ENCODE measurements at regions of chr3 and their contacts with region 1.

Region 1: GRCh38 chr3:4711689-4711992 is 218.5 kb downstream of the ITPR1 start:
- DNase-seq: no peak
- H3K4me3 ChIP-seq: no peak overlapping the region
- H3K27ac ChIP-seq: peak overlapping the region in 1 of 2 donors; percentile 54
- H3K4me1 ChIP-seq: peaks cover 0 to 12% (median 3%) of the 10 kb centered on the region in 4 donors
- H3K27me3 ChIP-seq: no peaks in the 10 kb centered on the region
- CTCF ChIP-seq: peak in 1 of 2 experiments; percentile 3

Region 2: GRCh38 chr3:4633078-4634004 is 78.3 kb before region 1 on chr3:
- intact Hi-C with region 1: no loop called
- DNase-seq: no peak
- H3K4me3 ChIP-seq: no peak overlapping the region
- H3K27ac ChIP-seq: peak overlapping the region; percentile 36 to 51
- H3K4me1 ChIP-seq: peaks cover 0 to 10% (median 3%) of the 10 kb centered on the region in 4 donors
- H3K27me3 ChIP-seq: no peaks in the 10 kb centered on the region
- CTCF ChIP-seq: peak; percentile 75 to 83

Region 3: GRCh38 chr3:4656626-4657328 is 54.9 kb before region 1 on chr3:
- intact Hi-C with region 1: no loop called
- DNase-seq: no peak
- H3K4me3 ChIP-seq: no peak overlapping the region
- H3K27ac ChIP-seq: peak overlapping the region; percentile 44 to 69
- H3K4me1 ChIP-seq: peaks cover 0 to 18% (median 10%) of the 10 kb centered on the region in 4 donors
- H3K27me3 ChIP-seq: no peaks in the 10 kb centered on the region
- CTCF ChIP-seq: no peak

Region 4: DNA sequence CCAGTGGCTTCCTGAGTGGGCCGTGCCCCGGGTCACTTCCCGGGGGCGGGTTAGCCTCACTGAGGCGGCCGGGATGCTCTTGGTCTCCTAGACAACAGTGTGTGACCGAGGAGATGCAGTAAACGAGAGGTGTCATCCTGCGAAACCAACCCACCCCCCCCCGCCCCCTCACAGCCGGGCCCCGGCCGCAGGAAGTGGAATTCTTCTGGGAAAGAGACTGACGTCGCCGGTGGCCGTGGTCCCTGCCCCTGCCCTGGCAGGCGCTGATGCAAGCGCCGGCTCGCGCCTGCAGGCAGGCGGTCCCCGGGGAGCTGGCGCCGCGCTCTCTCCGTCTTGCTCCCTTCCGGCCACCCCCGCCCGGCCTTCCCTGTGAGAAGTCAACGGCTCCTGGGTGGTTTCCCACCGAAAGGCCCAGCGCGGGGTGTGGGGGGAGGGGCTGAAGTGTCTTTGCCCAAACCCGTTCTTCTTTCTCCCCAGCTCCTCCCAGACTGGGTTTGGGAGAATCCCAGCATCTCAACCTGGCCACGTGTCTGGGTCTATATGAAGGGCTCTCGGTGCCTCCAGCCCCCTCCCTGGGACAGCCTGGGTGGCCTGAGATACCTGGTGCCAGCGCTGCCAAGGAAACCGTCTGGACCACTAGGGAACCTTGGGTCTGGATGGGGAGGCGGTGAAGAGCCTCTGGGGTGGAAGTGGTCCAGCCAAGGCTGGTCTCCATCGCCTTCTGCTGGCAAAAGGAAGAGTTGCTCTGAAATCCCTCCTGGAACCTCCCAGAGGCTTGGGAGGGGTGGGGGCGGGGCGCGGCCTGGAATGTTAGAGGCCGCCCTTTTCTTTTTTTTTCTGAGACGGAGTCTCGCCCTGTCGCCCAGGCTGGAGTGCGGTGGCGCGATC is 314.9 kb after region 1 on chr3:
- intact Hi-C with region 1: loop called (anchors 2 kb)
- DNase-seq: peak; percentile 85 to 98
- H3K4me3 ChIP-seq: peak overlapping the region; percentile 50 to 57
- H3K27ac ChIP-seq: peak overlapping the region; percentile 79 to 85
- H3K4me1 ChIP-seq: peaks cover 0 to 19% (median 7%) of the 10 kb centered on the region in 4 donors
- H3K27me3 ChIP-seq: no peaks in the 10 kb centered on the region
- CTCF ChIP-seq: peak; percentile 75 to 83

Region 5: GRCh38 chr3:5059782-5060181 is 348.1 kb after region 1 on chr3:
- intact Hi-C with region 1: loop called (anchors 2 kb)
- DNase-seq: no peak
- H3K4me3 ChIP-seq: no peak overlapping the region
- H3K27ac ChIP-seq: no peak overlapping the region
- H3K4me1 ChIP-seq: peaks cover 0 to 17% (median 10%) of the 10 kb centered on the region in 4 donors
- H3K27me3 ChIP-seq: no peaks in the 10 kb centered on the region
- CTCF ChIP-seq: no peak